Endothelial cell of umbilical vein (primary cell): ENCODE measurements at regions of chr5 and their contacts with region 1.

Region 1: GRCh38 chr5:98768160-98769005 is 5.1 kb upstream of the RGMB start:
- DNase-seq: peak; percentile 78
- H3K4me3 ChIP-seq: peak overlapping the region; percentile 70 to 96 (median 90)
- H3K27ac ChIP-seq: peak overlapping the region; percentile 25
- H3K4me1 ChIP-seq: peaks cover 20% of the 10 kb centered on the region
- H3K27me3 ChIP-seq: no peaks in the 10 kb centered on the region
- CTCF ChIP-seq: peak; percentile 84 to 90
- POLR2A ChIP-seq: no peak

Region 2: DNA sequence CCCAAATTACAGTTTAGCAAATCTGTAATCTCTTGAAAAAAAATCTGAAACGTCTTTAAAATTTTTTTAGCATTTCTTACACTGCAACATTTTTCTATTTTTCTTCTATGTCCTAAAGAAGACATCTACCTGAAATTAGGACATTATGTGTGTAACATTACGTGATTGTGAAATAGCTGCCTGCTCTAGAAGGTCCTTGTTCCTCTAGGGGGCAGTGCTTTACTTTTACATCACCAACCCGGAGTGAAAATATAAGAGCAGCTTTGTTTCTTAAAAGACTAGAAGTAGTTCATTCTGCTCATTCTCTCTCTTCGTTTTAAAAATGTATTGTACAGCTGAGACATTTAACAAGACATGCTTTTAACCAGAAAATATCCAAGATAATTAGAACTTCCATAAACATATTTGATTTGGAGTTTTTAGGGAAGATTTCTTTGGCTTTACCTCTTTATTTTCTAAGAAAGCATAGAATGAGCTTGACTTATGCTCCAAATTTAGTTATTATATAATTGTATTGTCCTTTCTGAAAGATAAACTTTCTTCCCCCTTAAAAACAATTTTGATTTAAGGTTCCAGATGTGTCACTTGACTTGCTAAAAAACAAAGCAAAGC is 1537.3 kb before region 1 on chr5:
- CTCF ChIA-PET with region 1: interaction called, 94 read pairs
- POLR2A ChIA-PET with region 1: no interaction called
- dilution Hi-C with region 1: no loop called
- intact Hi-C with region 1: loop called (anchors 1 kb)
- DNase-seq: peak; percentile 78
- H3K4me3 ChIP-seq: no peak overlapping the region
- H3K27ac ChIP-seq: no peak overlapping the region
- H3K4me1 ChIP-seq: peaks cover 6% of the 10 kb centered on the region
- H3K27me3 ChIP-seq: no peaks in the 10 kb centered on the region
- CTCF ChIP-seq: peak; percentile 54 to 69
- POLR2A ChIP-seq: no peak

Region 3: GRCh38 chr5:97534166-97534565 is 1234.2 kb before region 1 on chr5:
- CTCF ChIA-PET with region 1: interaction called, 45 read pairs
- POLR2A ChIA-PET with region 1: no interaction called
- dilution Hi-C with region 1: no loop called
- intact Hi-C with region 1: loop called (anchors 2 kb)
- DNase-seq: peak; percentile 75
- H3K4me3 ChIP-seq: no peak overlapping the region
- H3K27ac ChIP-seq: no peak overlapping the region
- H3K4me1 ChIP-seq: peaks cover 3% of the 10 kb centered on the region
- H3K27me3 ChIP-seq: no peaks in the 10 kb centered on the region
- CTCF ChIP-seq: peak; percentile 47 to 68
- POLR2A ChIP-seq: no peak

Region 4: DNA sequence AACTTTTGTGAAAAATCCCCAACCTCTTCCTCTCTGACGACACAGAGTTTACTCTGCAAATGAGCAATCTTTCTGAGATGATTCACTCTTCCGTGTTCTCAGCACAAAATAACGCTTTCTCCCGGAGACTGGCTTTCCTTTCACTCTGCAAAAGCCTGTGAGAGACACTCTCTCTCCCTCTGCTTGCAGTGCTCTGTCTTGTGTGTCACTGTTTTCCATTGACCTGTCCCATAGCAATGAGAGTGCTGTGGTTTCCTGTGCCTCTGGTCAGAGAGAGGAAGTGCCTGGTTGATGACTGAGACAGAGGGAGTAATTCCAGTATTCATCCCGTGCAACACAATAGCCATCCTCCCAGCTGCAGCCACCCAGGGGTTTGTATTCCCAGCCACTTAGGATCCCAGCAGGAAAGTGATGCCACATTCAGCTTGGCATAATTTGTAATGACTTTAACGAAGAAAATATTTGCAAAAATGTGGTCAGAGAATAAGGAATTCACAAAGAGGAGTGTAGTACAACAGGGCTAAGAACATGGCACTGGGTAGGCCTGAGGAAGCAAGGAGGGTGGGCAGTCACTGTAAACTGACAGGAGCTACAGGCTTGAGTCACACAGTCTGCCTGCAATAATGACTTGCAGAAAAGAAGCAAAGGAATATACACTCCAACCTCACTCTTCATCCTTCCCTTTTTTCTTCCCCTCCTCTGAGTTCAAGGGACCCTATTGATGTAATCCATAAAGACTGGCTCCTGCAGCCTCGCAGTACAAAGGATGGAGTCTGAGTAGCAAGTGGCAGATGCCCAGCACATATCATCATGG is 458.4 kb before region 1 on chr5:
- CTCF ChIA-PET with region 1: interaction called, 19 read pairs
- POLR2A ChIA-PET with region 1: no interaction called
- dilution Hi-C with region 1: no loop called
- intact Hi-C with region 1: loop called (anchors 1 kb)
- DNase-seq: peak; percentile 95
- H3K4me3 ChIP-seq: peak overlapping the region in 2 of 3 experiments; percentile 10 to 72
- H3K27ac ChIP-seq: peak overlapping the region; percentile 97
- H3K4me1 ChIP-seq: peaks cover 63% of the 10 kb centered on the region
- H3K27me3 ChIP-seq: no peaks in the 10 kb centered on the region
- CTCF ChIP-seq: no peak
- POLR2A ChIP-seq: no peak

Region 5: GRCh38 chr5:98750693-98751092 is 17.7 kb before region 1 on chr5:
- CTCF ChIA-PET with region 1: interaction called, 10 read pairs
- POLR2A ChIA-PET with region 1: no interaction called
- dilution Hi-C with region 1: no loop called
- intact Hi-C with region 1: no loop called
- DNase-seq: peak; percentile 16
- H3K4me3 ChIP-seq: no peak overlapping the region
- H3K27ac ChIP-seq: no peak overlapping the region
- H3K4me1 ChIP-seq: no peaks in the 10 kb centered on the region
- H3K27me3 ChIP-seq: no peaks in the 10 kb centered on the region
- CTCF ChIP-seq: peak; percentile 20 to 36
- POLR2A ChIP-seq: no peak

Region 6: DNA sequence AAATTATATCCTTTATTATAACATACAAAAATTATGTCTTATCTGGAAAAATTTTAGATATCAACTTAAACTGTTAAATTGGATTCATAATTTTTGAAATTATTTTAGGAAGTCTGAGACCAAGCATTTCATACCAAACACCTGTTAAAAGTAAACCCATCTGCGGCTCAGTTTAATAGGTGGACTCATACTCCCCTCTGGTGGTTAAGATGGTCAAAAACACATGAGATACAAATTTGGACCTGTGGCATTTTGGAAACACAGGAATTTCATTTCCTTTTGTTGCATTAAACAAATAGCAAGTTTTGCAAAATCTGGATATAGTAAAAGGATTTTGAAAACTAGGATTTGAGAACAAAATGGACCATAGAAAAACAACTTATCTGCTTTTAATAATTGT is 58.8 kb after region 1 on chr5:
- CTCF ChIA-PET with region 1: interaction called, 3 read pairs
- POLR2A ChIA-PET with region 1: no interaction called
- dilution Hi-C with region 1: no loop called
- intact Hi-C with region 1: loop called (anchors 2 kb)
- DNase-seq: peak; percentile 49
- H3K4me3 ChIP-seq: no peak overlapping the region
- H3K27ac ChIP-seq: no peak overlapping the region
- H3K4me1 ChIP-seq: no peaks in the 10 kb centered on the region
- H3K27me3 ChIP-seq: no peaks in the 10 kb centered on the region
- CTCF ChIP-seq: peak; percentile 12 to 31
- POLR2A ChIP-seq: no peak

Region 7: DNA sequence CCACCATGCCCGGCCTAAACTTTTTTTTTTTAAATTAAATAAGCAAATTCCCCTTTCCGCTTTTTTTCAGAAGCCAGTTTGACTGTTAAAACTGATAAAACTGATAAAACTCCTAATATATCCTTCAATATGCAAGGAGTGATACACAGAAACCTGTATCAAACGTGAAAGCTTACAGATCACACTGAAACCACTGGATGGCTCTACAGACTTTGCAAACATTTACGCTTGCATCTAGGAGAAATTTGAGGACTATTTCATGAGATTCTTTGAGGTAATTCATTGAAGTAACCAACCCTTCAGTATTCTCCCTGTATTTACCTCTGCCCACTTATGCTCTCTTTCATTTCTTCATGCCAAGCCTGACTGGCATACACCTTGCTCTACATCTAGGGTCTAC is 201.0 kb after region 1 on chr5:
- CTCF ChIA-PET with region 1: no interaction called
- POLR2A ChIA-PET with region 1: no interaction called
- dilution Hi-C with region 1: no loop called
- intact Hi-C with region 1: no loop called
- DNase-seq: no peak
- H3K4me3 ChIP-seq: no peak overlapping the region
- H3K27ac ChIP-seq: no peak overlapping the region
- H3K4me1 ChIP-seq: no peaks in the 10 kb centered on the region
- H3K27me3 ChIP-seq: no peaks in the 10 kb centered on the region
- CTCF ChIP-seq: no peak
- POLR2A ChIP-seq: no peak